ENCODE measurements at regions of chr5 and their contacts with region 1.

Region 1: DNA sequence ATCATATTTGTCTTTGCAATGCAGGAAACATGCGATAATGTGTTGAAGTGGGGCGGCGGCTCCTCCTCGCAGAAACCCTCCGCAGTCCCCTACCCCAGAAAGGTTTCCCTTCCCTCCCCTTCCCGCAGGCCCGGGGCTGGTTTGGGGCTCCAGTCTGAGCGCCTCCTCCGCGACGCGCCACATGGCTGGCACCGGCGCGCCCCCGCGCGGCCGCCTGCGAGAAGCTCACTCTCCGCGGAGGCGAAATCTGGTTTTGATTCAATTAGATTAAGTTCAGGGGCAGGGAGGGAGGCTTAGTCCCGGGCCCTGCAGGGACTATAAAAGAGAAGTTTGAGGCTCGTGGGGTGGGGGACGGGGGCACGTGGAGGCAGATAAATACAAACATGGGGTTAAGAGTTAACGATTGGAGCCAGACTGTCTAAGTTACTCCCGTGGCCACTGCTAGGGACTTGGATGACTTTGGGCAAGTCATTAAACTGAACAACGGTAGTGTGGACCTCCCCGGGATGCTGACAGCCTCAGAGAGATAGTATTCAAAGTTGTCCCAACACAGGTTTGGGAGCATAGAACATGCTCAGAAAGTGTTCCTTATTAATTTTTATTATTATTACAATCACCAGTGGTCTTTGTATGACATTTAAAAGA is 69.4 kb downstream of the MSX2 start:
- DNase-seq: peak; percentile 76
- H3K4me3 Mint-ChIP-seq: peak overlapping the region; percentile 4
- H3K27ac Mint-ChIP-seq: no peak overlapping the region
- H3K4me1 Mint-ChIP-seq: peaks cover 5% of the 10 kb centered on the region
- H3K27me3 Mint-ChIP-seq: no peaks in the 10 kb centered on the region
- CTCF ChIP-seq: peak; percentile 99

Region 2: DNA sequence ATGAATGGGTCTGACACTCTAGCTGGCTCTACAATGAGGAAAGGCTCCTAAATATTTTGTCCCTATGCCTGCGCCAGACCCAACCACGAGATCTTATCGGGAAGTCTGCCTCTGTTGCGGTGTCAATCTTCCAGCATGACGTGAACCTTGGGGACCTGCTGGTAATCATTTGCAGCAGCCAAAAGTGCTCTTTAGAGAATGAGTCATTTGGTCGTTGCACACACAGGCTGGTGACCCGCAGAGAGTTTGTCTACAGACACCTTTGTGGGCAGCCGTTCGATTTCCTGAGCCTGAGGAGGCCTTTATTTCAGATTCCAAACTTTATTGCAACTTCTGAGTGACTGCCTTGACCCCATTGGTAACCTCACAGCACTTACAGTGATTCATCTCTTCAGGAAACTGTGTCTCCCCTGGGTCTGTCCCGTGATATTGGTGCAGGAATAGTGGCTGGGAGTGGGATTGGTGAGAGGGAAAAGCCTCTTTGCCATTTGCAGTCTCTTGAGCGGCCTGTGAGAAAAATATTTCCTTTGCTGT is 422.1 kb before region 1 on chr5:
- CTCF ChIA-PET with region 1: no interaction called
- POLR2A ChIA-PET with region 1: no interaction called
- intact Hi-C with region 1: no loop called
- DNase-seq: peak; percentile 50
- H3K4me3 Mint-ChIP-seq: no peak overlapping the region
- H3K27ac Mint-ChIP-seq: no peak overlapping the region
- H3K4me1 Mint-ChIP-seq: peaks cover 6% of the 10 kb centered on the region
- H3K27me3 Mint-ChIP-seq: no peaks in the 10 kb centered on the region
- CTCF ChIP-seq: no peak

Region 3: DNA sequence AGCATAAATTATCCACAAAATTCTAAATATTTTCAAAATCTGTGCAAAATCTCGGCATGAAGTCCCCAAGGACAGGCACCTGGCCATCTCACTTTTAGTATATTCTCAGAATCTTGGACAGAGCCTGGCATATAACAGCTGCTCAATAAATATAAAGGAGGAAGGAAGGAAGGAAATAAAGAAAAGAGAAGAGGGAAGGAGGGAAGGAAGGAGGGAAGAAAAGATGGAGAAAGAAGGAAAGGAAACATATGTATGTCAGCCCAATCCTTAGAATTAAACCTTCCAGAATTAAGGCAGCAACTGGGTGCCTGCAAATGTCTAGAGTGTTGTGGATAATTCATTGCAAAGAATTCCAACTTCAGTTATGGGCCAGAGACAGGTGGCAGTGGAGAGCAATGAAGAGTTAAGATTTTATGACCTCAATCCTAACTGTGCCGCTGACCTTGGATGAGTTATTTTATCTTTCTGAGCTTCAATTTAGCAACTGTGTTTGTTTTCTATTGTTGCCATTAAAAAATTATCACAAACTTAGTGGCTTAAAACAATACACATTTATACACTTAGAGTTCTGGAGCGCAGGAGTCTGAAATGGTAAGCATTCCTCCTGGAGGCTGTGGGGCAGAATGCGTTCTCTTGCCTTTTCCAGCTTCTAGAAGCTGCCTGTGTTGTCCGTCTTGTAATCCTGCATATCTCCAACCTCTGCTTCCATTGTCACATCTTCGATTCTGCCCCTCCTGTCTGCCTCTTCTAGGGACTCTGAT is 270.3 kb before region 1 on chr5:
- CTCF ChIA-PET with region 1: no interaction called
- POLR2A ChIA-PET with region 1: no interaction called
- intact Hi-C with region 1: loop called (anchors 1 kb)
- DNase-seq: no peak
- H3K4me3 Mint-ChIP-seq: no peak overlapping the region
- H3K27ac Mint-ChIP-seq: no peak overlapping the region
- H3K4me1 Mint-ChIP-seq: no peaks in the 10 kb centered on the region
- H3K27me3 Mint-ChIP-seq: peaks cover 14% of the 10 kb centered on the region
- CTCF ChIP-seq: peak; percentile 36

Region 4: DNA sequence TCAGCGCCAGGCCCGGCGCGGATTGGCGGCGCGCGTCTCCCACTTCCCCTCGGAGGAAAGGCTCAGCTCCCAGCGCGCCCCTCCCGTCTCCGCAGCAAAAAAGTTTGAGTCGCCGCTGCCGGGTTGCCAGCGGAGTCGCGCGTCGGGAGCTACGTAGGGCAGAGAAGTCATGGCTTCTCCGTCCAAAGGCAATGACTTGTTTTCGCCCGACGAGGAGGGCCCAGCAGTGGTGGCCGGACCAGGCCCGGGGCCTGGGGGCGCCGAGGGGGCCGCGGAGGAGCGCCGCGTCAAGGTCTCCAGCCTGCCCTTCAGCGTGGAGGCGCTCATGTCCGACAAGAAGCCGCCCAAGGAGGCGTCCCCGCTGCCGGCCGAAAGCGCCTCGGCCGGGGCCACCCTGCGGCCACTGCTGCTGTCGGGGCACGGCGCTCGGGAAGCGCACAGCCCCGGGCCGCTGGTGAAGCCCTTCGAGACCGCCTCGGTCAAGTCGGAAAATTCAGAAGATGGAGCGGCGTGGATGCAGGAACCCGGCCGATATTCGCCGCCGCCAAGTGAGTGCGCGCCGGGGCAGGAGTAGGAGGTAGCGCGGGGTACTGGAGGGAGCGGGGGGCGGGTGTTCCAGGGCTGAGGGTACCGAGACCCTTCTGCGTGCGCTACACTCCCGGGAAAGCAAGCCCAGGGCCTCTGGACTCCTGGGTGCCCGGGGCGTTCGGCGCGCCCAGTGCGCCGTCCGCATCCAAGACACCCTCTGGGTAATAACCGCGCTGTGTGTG is 69.1 kb before region 1 on chr5 and contains the start of gene MSX2:
- CTCF ChIA-PET with region 1: interaction called, 5 read pairs
- POLR2A ChIA-PET with region 1: no interaction called
- intact Hi-C with region 1: loop called (anchors 2 kb)
- DNase-seq: peak; percentile 96
- H3K4me3 Mint-ChIP-seq: peak within 1 kb of the TSS; percentile 86
- H3K27ac Mint-ChIP-seq: peak within 1 kb of the TSS; percentile 75
- H3K4me1 Mint-ChIP-seq: peaks cover 17% of the 10 kb centered on the region
- H3K27me3 Mint-ChIP-seq: peaks cover 30% of the 10 kb centered on the region
- CTCF ChIP-seq: no peak
- total RNA-seq, gene MSX2: 4.8 and 5.6 TPM in 2 replicates

Region 5: GRCh38 chr5:174777583-174777982 is 16.2 kb before region 1 on chr5:
- CTCF ChIA-PET with region 1: interaction called, 29 read pairs
- POLR2A ChIA-PET with region 1: no interaction called
- intact Hi-C with region 1: no loop called
- DNase-seq: no peak
- H3K4me3 Mint-ChIP-seq: no peak overlapping the region
- H3K27ac Mint-ChIP-seq: no peak overlapping the region
- H3K4me1 Mint-ChIP-seq: peaks cover 7% of the 10 kb centered on the region
- H3K27me3 Mint-ChIP-seq: peaks cover 17% of the 10 kb centered on the region
- CTCF ChIP-seq: no peak

Region 6: DNA sequence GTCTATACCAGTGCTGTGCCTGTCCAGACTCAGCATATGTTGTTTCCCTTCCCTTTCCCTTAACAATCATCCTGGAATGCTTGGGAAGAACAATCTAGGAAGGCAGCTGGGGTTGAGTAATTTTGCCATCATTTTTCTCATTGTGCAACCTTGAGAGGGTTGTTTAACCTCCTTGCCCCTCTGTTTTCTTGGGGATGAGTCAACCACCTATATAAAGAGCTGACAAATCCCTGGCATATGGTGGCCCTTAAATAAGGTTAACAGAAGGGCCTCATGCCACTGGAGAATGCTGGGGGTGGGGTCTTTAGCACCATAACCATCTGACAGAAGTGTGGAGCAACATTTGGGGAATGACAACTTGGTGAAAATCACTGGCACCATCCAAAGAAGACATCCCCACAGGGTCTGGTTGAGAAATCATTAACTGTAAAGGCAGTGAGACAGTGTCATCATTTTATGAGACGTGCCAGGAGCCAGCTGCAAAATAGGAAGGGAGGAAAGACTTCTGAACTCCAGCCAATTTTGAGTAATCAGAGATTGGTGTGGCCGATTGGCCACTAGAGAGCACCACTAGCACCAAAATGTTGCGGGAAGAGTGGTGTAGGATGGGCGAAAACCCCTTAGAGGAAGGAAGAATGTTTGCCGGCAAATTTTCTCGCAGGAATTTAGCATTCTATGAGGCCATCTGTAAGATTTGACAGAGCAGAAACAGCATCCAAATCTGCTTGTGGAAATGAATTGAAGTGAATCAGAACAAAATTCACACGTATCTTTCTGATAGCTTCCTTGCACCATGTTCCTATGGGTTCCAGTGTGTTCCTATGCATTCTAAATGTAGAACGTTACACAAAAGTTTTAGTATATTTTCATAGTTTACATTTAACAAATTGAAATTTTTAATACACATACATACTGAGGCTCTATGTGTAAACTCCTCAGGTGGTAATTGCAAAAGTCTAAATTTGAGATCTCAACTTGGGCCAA is 44.4 kb after region 1 on chr5:
- CTCF ChIA-PET with region 1: interaction called, 3 read pairs
- POLR2A ChIA-PET with region 1: no interaction called
- intact Hi-C with region 1: loop called (anchors 1 kb)
- DNase-seq: peak; percentile 99
- H3K4me3 Mint-ChIP-seq: no peak overlapping the region
- H3K27ac Mint-ChIP-seq: peak overlapping the region; percentile 65
- H3K4me1 Mint-ChIP-seq: peaks cover 20% of the 10 kb centered on the region
- H3K27me3 Mint-ChIP-seq: no peaks in the 10 kb centered on the region
- CTCF ChIP-seq: peak; percentile 43

Region 7: DNA sequence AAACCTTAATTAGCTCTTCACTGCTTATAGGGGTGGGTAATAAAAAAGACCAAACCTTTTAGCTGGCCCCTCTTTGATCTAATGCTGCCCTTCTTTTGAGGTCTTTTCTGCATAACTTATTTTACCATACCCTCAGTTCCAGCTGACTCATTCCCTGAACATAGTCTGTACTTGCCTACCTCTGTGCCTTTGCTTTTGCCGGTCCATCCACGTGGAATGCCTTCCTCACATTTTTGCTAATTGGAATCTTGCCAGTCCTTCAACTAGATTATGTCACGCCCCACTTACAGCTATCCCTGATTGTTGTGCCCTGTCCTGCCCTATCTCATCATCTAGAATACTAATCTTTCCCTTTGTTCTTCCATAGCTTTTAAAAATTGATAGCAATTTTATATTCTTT is 1698.6 kb after region 1 on chr5:
- CTCF ChIA-PET with region 1: no interaction called
- POLR2A ChIA-PET with region 1: no interaction called
- intact Hi-C with region 1: no loop called
- DNase-seq: peak; percentile 86
- H3K4me3 Mint-ChIP-seq: peak overlapping the region; percentile 17
- H3K27ac Mint-ChIP-seq: peak overlapping the region; percentile 63
- H3K4me1 Mint-ChIP-seq: peaks cover 30% of the 10 kb centered on the region
- H3K27me3 Mint-ChIP-seq: no peaks in the 10 kb centered on the region
- CTCF ChIP-seq: no peak